ENCODE measurements at regions of chr1 and their contacts with region 1.

Region 1: DNA sequence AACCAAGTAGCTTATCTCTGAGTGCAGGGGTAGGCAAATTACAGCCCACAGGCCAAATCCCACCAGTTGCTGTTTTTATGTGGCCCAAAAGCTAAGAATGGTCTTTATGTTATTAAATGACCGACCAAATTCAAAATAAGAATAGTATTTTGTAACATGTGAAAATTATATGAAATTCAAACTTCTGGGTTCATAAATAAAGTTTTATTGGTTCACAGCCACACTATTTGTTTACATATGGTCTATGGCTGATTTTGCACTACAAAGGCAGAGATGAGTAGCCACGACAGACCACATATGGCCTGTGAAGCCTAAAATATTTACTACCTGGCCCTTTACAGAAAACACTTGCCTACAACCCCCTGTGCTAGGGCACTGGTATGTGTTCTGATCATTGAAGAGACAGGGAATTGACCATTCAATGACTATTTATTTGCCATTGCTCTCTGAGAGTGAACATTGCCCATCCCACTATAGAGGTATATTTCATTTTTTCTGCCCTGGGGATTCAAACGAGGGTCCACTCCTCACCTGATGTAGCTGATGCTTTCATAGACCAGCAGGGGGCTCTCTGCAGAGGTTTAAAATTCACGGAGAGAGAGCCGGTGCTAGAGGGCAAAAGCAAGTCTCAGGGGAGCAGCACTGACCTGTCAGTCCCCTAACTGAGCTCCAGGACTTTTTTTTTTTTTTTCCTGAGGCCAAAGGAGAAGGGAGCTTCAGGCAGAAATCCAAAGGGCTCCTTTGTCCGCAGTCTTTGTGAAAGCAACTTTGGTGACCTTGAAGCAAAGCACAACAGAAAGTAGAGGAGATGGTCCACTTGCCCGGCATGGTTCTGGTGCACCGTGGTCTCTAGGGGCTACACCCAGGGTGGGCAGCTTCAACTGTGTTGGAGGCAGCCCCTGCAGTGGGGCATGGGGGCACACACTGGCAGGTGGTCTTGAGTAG is 7.3 kb upstream of the GNL2 start:
- DNase-seq: peak in 7 of 9 experiments; percentile 10 to 64 (median 39)
- ATAC-seq: peak; percentile 75
- H3K4me3 ChIP-seq: no peak overlapping the region
- H3K4me3 Mint-ChIP-seq: no peak overlapping the region
- H3K27ac ChIP-seq: no peak overlapping the region
- H3K27ac Mint-ChIP-seq: no peak overlapping the region
- H3K4me1 ChIP-seq: no peaks in the 10 kb centered on the region
- H3K4me1 Mint-ChIP-seq: no peaks in the 10 kb centered on the region
- H3K27me3 ChIP-seq: peaks cover 0 to 2% of the 10 kb centered on the region in 2 experiments
- H3K27me3 Mint-ChIP-seq: peaks cover 7% of the 10 kb centered on the region
- CTCF ChIP-seq: peak; percentile 80

Region 2: DNA sequence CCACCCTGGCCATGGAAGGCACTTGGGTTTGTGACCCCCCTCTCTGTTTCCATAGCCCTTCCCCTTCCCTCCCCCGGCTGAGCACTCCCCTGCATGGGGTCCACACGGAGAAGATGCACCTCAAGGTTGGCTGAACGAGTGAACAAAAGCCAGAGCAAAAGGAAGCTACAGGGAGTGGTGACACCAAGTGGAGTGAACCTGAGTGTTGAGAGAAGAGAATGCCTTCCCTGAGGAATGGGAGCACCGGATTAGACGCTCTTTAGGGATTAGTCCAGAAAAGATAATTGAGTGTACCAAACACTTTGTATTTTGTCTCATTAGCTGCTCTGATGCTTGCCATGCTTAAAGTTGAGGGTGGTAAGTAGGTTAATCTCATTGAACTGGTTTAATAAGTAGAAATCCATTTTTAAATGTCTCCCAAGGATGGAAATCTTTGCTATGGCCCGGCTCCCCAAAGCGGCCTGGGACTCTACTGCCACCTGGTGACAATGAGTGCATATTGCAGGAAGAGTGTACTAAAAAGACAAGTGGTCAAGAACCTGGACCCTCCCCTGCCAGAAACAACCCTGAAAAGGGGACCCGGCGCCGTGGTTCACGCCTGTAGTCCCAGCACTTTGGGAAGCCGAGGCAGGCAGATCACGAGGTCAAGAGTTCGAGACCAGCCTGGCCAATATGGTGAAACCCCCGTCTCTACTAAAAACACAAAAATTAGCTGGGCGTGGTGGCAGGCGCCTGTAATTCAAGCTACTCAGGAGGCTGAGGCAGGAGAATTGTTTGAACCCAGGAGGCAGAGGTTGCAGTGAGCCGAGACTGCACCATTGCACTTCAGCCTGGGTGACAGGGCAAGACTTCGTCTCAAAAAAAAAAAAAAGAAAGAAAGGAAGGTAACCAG is 279.3 kb before region 1 on chr1:
- CTCF ChIA-PET with region 1: no interaction called
- POLR2A ChIA-PET with region 1: no interaction called
- intact Hi-C with region 1: no loop called
- DNase-seq: peak in 2 of 9 experiments; percentile 17 to 24
- ATAC-seq: no peak
- H3K4me3 ChIP-seq: no peak overlapping the region
- H3K4me3 Mint-ChIP-seq: no peak overlapping the region
- H3K27ac ChIP-seq: no peak overlapping the region
- H3K27ac Mint-ChIP-seq: no peak overlapping the region
- H3K4me1 ChIP-seq: no peaks in the 10 kb centered on the region
- H3K4me1 Mint-ChIP-seq: no peaks in the 10 kb centered on the region
- H3K27me3 ChIP-seq: peaks cover 3 to 7% of the 10 kb centered on the region in 2 experiments
- H3K27me3 Mint-ChIP-seq: peaks cover 35% of the 10 kb centered on the region
- CTCF ChIP-seq: peak; percentile 19

Region 3: GRCh38 chr1:37588939-37589338 is 14.1 kb before region 1 on chr1:
- CTCF ChIA-PET with region 1: interaction called, 18 read pairs
- POLR2A ChIA-PET with region 1: no interaction called
- intact Hi-C with region 1: no loop called
- DNase-seq: no peak
- ATAC-seq: no peak
- H3K4me3 ChIP-seq: no peak overlapping the region
- H3K4me3 Mint-ChIP-seq: no peak overlapping the region
- H3K27ac ChIP-seq: no peak overlapping the region
- H3K27ac Mint-ChIP-seq: no peak overlapping the region
- H3K4me1 ChIP-seq: peaks cover 6% of the 10 kb centered on the region
- H3K4me1 Mint-ChIP-seq: peaks cover 14% of the 10 kb centered on the region
- H3K27me3 ChIP-seq: no peaks in the 10 kb centered on the region
- H3K27me3 Mint-ChIP-seq: no peaks in the 10 kb centered on the region
- CTCF ChIP-seq: no peak

Region 4: GRCh38 chr1:37647281-37647680 is 44.3 kb after region 1 on chr1:
- CTCF ChIA-PET with region 1: no interaction called
- POLR2A ChIA-PET with region 1: no interaction called
- intact Hi-C with region 1: no loop called
- DNase-seq: no peak
- ATAC-seq: no peak
- H3K4me3 ChIP-seq: no peak overlapping the region
- H3K4me3 Mint-ChIP-seq: no peak overlapping the region
- H3K27ac ChIP-seq: no peak overlapping the region
- H3K27ac Mint-ChIP-seq: no peak overlapping the region
- H3K4me1 ChIP-seq: no peaks in the 10 kb centered on the region
- H3K4me1 Mint-ChIP-seq: no peaks in the 10 kb centered on the region
- H3K27me3 ChIP-seq: no peaks in the 10 kb centered on the region
- H3K27me3 Mint-ChIP-seq: peaks cover 23% of the 10 kb centered on the region
- CTCF ChIP-seq: no peak

Measured in CD8-positive, alpha-beta T cell (primary cell).